CD4-positive, alpha-beta memory T cell (primary cell): ENCODE measurements at regions of chr1 and their contacts with region 1.

Region 1: GRCh38 chr1:116372587-116373444 is at the start of gene ATP1A1:
- DNase-seq: peak; percentile 96 to 97 (median 96)
- H3K4me3 ChIP-seq: peak within 1 kb of the TSS; percentile 82 to 96
- H3K4me3 Mint-ChIP-seq: peak within 1 kb of the TSS; percentile 95 to 99 (median 98)
- H3K27ac ChIP-seq: peak within 1 kb of the TSS; percentile 71
- H3K27ac Mint-ChIP-seq: peak within 1 kb of the TSS; percentile 92 to 99 (median 97)
- H3K4me1 ChIP-seq: peaks cover 49% of the 10 kb centered on the region
- H3K4me1 Mint-ChIP-seq: peaks cover 27 to 55% (median 38%) of the 10 kb centered on the region in 4 donors
- H3K27me3 ChIP-seq: no peaks in the 10 kb centered on the region
- H3K27me3 Mint-ChIP-seq: peaks cover 1% of the 10 kb centered on the region in 2 donors
- total RNA-seq, gene ATP1A1: 251 to 256 TPM

Region 2: DNA sequence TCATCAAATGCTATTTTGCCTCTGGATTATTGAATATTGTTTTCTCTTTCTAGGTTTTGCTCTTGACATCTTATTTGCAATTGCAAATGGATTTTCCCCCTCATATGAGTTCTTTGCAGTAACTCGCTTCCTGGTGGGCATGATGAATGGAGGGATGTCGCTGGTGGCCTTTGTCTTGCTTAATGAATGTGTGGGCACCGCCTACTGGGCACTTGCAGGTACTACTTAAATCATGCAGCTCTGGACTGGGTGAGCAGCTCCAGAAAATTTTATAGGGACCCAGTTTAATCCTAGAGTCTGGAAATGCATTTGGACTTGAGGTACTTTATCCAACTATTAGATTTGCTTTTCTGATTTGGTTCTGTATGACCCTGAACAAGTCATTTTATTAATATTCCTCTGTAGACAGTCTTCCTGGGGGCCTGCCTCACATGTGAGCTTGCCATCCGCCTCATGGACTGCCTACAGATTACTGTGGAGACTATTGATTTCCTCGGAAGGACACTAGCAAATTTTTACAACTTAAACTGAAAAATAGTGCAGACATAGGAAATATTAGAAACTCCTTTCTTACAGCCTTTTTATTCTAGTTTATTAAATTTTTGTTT is 352.0 kb before region 1 on chr1:
- CTCF ChIA-PET with region 1: no interaction called
- POLR2A ChIA-PET with region 1: no interaction called
- intact Hi-C with region 1: no loop called
- DNase-seq: peak in 4 of 5 donors; percentile 11 to 34 (median 25)
- H3K4me3 ChIP-seq: no peak overlapping the region
- H3K4me3 Mint-ChIP-seq: no peak overlapping the region
- H3K27ac ChIP-seq: no peak overlapping the region
- H3K27ac Mint-ChIP-seq: no peak overlapping the region
- H3K4me1 ChIP-seq: no peaks in the 10 kb centered on the region
- H3K4me1 Mint-ChIP-seq: peaks cover 0 to 3% (median 2%) of the 10 kb centered on the region in 4 donors
- H3K27me3 ChIP-seq: no peaks in the 10 kb centered on the region
- H3K27me3 Mint-ChIP-seq: peaks cover 0 to 3% of the 10 kb centered on the region in 2 donors

Region 3: DNA sequence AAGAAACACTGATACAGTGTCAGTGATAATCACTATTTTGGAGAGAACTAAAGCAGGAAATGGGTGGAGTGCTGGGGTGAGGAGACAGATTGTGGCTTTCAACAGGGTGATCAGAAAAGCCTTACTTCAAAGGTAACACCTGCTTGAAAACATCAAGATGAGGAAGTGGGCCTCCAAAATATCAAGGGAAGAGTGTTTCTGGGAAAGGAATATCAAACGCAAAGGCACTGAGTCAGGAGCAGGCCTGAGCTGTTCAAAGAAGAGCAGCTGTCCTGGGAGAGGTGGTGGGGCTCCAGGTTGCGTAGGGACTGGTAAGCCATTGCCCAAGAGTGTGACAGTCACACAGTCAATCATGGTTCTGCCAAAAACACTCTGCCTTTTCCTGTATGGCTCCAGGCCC is 46.9 kb before region 1 on chr1:
- CTCF ChIA-PET with region 1: interaction called, 18 read pairs
- POLR2A ChIA-PET with region 1: interaction called, 32 read pairs
- intact Hi-C with region 1: loop called (anchors 1 kb)
- DNase-seq: peak; percentile 56 to 72 (median 68)
- H3K4me3 ChIP-seq: peak overlapping the region in 1 of 2 donors; percentile 19
- H3K4me3 Mint-ChIP-seq: peak overlapping the region; percentile 53 to 83 (median 74)
- H3K27ac ChIP-seq: peak overlapping the region; percentile 60
- H3K27ac Mint-ChIP-seq: peak overlapping the region; percentile 74 to 98 (median 90)
- H3K4me1 ChIP-seq: peaks cover 79% of the 10 kb centered on the region
- H3K4me1 Mint-ChIP-seq: peaks cover 56 to 91% (median 78%) of the 10 kb centered on the region in 4 donors
- H3K27me3 ChIP-seq: no peaks in the 10 kb centered on the region
- H3K27me3 Mint-ChIP-seq: no peaks in the 10 kb centered on the region

Region 4: DNA sequence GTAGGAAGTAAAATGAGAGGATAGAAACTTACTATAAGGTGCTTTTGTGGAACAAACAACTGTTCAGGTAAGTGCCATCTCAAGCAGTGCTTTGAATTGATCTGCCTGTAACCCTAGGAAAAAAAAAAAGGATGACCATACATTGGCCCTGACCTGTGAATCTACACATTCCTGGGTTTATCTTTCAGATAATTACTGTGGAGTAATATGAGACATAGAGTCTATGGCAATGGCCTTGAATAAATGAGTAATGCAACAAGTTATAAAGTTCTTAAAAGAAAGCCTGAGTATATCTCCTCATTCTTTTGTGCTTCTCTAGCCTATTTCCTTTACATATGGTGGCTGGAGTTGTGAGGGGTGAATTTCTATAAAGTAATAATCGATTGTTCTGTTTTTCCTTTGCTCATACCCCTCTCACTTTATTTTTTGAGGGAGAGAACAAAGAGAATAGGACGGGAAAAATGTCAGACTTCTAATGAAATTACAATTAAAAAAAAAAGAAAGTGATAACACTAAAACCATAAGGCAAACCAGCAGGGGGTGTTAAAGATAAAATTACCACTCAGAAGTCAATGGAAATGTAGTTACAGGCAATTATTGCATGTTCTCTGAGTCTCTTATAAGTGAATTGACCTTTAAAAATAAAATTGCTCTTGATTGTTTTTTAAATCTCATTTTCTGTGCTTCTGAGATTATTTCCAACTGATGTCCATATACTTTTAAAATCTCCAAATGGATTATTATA is 12.2 kb before region 1 on chr1:
- CTCF ChIA-PET with region 1: interaction called, 13 read pairs
- POLR2A ChIA-PET with region 1: interaction called, 11 read pairs
- intact Hi-C with region 1: loop called (anchors 2 kb)
- DNase-seq: peak in 4 of 5 donors; percentile 40 to 47 (median 43)
- H3K4me3 ChIP-seq: no peak overlapping the region
- H3K4me3 Mint-ChIP-seq: no peak overlapping the region
- H3K27ac ChIP-seq: no peak overlapping the region
- H3K27ac Mint-ChIP-seq: peak overlapping the region in 1 of 7 donors; percentile 22
- H3K4me1 ChIP-seq: peaks cover 6% of the 10 kb centered on the region
- H3K4me1 Mint-ChIP-seq: peaks cover 13 to 30% (median 20%) of the 10 kb centered on the region in 4 donors
- H3K27me3 ChIP-seq: no peaks in the 10 kb centered on the region
- H3K27me3 Mint-ChIP-seq: no peaks in the 10 kb centered on the region

Region 5: DNA sequence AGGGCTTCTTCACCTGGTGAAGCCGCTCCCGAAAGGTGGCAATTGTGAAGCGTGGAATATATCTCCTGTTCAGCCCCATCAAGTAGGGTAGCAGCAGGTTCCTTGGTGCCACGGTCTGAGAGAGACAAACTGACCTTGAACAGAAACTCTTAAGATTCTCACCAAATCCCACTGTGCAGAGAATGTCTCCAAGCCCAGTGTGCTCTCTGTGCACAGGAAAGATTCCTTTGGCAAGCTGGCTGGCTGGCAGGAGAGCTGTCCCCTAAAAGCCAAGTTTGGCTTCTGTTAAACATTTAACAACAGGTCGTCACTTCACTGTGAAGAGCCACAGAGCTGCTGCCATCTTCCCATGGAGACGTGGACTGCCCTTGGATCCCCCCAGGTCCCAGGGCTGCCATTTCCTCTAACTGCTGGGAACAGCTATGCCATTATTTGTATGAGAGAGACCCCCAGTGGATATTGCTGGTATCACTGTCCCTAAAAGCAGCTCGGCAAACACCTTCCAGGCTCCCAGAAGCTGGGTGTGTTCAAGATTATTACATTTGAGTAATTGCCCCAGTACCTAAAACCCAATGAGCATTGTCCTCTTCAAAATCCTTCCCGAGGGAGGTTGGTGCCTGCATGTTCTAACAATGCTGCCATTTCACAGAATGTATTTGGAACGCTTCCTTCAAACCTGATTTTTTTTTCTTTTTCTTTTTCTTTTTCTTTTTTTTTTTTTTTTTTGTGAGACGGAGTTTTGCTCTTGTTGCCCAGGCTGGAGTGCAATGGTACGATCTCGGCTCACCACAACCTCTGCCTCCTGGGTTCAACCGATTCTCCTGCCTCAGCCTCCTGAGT is 126.2 kb after region 1 on chr1:
- CTCF ChIA-PET with region 1: interaction called, 13 read pairs
- POLR2A ChIA-PET with region 1: interaction called, 5 read pairs
- intact Hi-C with region 1: loop called (anchors 2 kb)
- DNase-seq: peak; percentile 38 to 59 (median 54)
- H3K4me3 ChIP-seq: no peak overlapping the region
- H3K4me3 Mint-ChIP-seq: peak overlapping the region in 1 of 8 donors; percentile 27
- H3K27ac ChIP-seq: no peak overlapping the region
- H3K27ac Mint-ChIP-seq: peak overlapping the region in 6 of 7 donors; percentile 42 to 90 (median 74)
- H3K4me1 ChIP-seq: peaks cover 31% of the 10 kb centered on the region
- H3K4me1 Mint-ChIP-seq: peaks cover 26 to 60% (median 35%) of the 10 kb centered on the region in 4 donors
- H3K27me3 ChIP-seq: no peaks in the 10 kb centered on the region
- H3K27me3 Mint-ChIP-seq: no peaks in the 10 kb centered on the region

Region 6: GRCh38 chr1:116737020-116737854 is 364.4 kb after region 1 on chr1:
- CTCF ChIA-PET with region 1: no interaction called
- POLR2A ChIA-PET with region 1: no interaction called
- intact Hi-C with region 1: no loop called
- DNase-seq: peak; percentile 82 to 85 (median 83)
- H3K4me3 ChIP-seq: peak overlapping the region in 1 of 2 donors; percentile 44
- H3K4me3 Mint-ChIP-seq: peak overlapping the region; percentile 50 to 80 (median 74)
- H3K27ac ChIP-seq: peak overlapping the region; percentile 97
- H3K27ac Mint-ChIP-seq: peak overlapping the region; percentile 97 to 100 (median 99)
- H3K4me1 ChIP-seq: peaks cover 49% of the 10 kb centered on the region
- H3K4me1 Mint-ChIP-seq: peaks cover 41 to 55% (median 46%) of the 10 kb centered on the region in 4 donors
- H3K27me3 ChIP-seq: no peaks in the 10 kb centered on the region
- H3K27me3 Mint-ChIP-seq: no peaks in the 10 kb centered on the region

Region 7: DNA sequence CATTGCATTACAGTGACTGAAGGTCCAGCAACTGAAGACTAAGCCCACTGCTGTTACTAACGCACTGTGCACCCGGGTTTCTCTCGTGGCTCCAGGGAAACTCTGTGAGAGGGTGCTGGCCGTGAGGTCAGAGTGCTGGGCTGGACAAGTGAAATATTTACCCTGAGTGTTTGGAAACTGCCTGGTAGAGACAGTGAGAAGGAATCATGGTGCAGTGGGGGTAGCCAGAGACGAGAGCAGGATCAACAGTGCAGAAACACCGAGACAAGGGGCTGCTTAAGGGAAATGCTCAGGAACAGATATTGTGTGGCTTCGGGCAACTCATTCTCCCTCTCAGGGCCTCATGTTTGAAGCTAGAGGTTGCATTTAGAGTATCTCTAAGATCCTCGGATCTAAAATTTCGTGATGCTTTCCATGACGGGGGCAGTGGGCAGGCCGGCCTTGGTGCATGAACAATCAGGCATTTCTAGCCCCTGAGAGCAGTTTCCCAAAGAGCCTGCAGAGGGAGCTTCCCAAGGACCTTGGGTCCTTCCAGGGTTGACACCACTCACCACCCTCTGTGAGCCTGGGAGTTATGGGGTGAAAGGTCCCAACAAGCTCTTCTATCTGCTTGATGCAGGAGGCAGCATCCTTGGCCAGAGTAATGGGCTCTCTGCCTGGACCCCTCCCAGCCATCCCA is 391.1 kb after region 1 on chr1:
- CTCF ChIA-PET with region 1: no interaction called
- POLR2A ChIA-PET with region 1: interaction called, 4 read pairs
- intact Hi-C with region 1: loop called (anchors 10 kb)
- DNase-seq: peak in 3 of 5 donors; percentile 39 to 80 (median 43)
- H3K4me3 ChIP-seq: peak overlapping the region; percentile 10 to 27
- H3K4me3 Mint-ChIP-seq: peak overlapping the region; percentile 76 to 94 (median 84)
- H3K27ac ChIP-seq: peak overlapping the region; percentile 88
- H3K27ac Mint-ChIP-seq: peak overlapping the region; percentile 97 to 99 (median 98)
- H3K4me1 ChIP-seq: peaks cover 97% of the 10 kb centered on the region
- H3K4me1 Mint-ChIP-seq: peaks cover 79 to 100% (median 88%) of the 10 kb centered on the region in 4 donors
- H3K27me3 ChIP-seq: no peaks in the 10 kb centered on the region
- H3K27me3 Mint-ChIP-seq: no peaks in the 10 kb centered on the region